ENCODE measurements at regions of chr5 and their contacts with region 1.

Region 1: DNA sequence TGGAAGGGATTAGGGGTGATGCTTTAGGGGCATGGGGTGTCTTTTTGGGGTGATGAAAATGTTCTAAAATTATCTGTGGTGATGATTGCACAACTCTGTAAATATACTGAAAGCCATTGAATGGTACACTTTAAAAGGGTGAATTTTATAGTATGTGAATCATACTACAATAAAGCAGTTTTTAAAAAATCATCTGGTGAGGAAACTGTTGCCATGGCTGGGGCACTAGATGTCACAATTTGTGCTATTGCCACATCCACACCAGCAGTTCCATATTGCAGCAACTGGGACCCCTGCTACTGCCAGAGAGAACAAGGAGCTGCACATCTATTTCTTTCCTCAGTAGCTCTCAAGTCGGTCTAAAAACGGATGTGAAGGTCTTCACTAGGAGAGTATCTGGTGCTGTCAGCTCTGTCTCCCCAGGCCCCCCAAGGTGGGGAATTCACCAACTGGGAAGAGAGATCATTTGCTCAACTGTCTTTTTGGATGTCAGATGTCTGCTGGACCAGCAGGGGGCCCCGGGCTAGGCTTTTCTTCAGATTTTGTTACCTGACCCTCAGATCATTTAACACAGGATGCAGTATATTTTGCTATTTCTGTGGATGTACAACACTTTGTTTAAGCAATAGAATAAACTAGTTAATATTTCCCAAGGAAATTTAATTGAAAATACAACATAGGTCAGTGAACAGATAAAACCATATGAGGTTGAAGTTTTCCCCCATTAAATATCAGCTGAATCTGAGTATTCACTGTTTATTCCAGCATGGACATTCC is 13.2 kb downstream of the CMYA5 start:
- DNase-seq: no peak
- H3K4me3 ChIP-seq: no peak overlapping the region
- H3K27ac ChIP-seq: no peak overlapping the region
- H3K4me1 ChIP-seq: peaks cover 0 to 12% (median 0%) of the 10 kb centered on the region in 6 donors
- H3K27me3 ChIP-seq: no peaks in the 10 kb centered on the region
- CTCF ChIP-seq: peak in 5 of 11 experiments; percentile 28 to 46 (median 39)
- POLR2A ChIP-seq: no peak

Region 2: DNA sequence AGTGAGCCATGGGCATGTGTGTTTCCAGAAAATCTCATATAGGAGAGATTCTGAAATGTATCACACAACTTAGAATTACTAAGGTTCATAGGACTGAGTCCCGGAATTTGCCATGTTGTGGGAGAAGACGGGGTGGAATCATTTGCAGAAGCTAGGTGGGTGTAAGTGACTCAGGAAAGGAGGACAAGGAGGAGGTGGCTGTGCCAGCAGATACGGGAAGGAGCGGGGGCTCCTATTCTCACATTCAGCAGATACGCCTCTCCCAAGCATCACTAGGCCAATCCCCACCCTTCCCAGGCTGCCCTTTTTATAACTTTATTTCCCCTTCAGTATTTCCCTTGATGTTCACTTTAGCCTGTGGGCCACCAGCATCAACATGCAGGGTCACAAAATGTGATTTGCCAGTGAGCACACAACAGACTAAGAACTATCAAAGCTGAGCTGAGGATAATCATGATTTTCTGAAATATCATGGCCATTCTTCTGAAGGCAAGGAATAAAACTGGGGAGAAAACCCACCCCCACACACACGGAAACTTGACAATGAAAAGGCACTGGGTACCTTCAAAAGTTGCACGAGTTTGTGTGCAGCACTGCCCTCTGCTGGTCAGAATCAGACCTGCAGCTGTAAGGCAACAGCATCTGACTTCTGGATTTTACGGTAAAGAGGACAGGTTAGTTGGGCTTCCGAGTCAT is 155.1 kb after region 1 on chr5:
- intact Hi-C with region 1: loop called (anchors 5 kb)
- DNase-seq: peak; percentile 84
- H3K4me3 ChIP-seq: no peak overlapping the region
- H3K27ac ChIP-seq: no peak overlapping the region
- H3K4me1 ChIP-seq: peaks cover 0 to 6% (median 0%) of the 10 kb centered on the region in 6 donors
- H3K27me3 ChIP-seq: peaks cover 0 to 8% (median 0%) of the 10 kb centered on the region in 7 donors
- CTCF ChIP-seq: peak; percentile 66 to 93 (median 90)
- POLR2A ChIP-seq: no peak